ENCODE measurements at regions of chr12 and their contacts with region 1.

Region 1: GRCh38 chr12:54251667-54252284 is 28.1 kb downstream of the CBX5 start:
- DNase-seq: no peak
- ATAC-seq: peak; percentile 75
- H3K4me3 Mint-ChIP-seq: no peak overlapping the region
- H3K27ac Mint-ChIP-seq: no peak overlapping the region
- H3K4me1 Mint-ChIP-seq: peaks cover 10% of the 10 kb centered on the region
- H3K27me3 Mint-ChIP-seq: no peaks in the 10 kb centered on the region

Region 2: GRCh38 chr12:54240971-54241588 is 10.7 kb before region 1 on chr12:
- CTCF ChIA-PET with region 1: interaction called, 19 read pairs
- POLR2A ChIA-PET with region 1: no interaction called
- intact Hi-C with region 1: no loop called
- DNase-seq: no peak
- ATAC-seq: peak; percentile 85
- H3K4me3 Mint-ChIP-seq: no peak overlapping the region
- H3K27ac Mint-ChIP-seq: peak overlapping the region; percentile 55
- H3K4me1 Mint-ChIP-seq: peaks cover 10% of the 10 kb centered on the region
- H3K27me3 Mint-ChIP-seq: no peaks in the 10 kb centered on the region

Region 3: GRCh38 chr12:54265364-54265812 is 13.6 kb after region 1 on chr12:
- CTCF ChIA-PET with region 1: interaction called, 23 read pairs
- POLR2A ChIA-PET with region 1: interaction called, 4 read pairs
- intact Hi-C with region 1: no loop called
- DNase-seq: no peak
- ATAC-seq: no peak
- H3K4me3 Mint-ChIP-seq: no peak overlapping the region
- H3K27ac Mint-ChIP-seq: no peak overlapping the region
- H3K4me1 Mint-ChIP-seq: peaks cover 35% of the 10 kb centered on the region
- H3K27me3 Mint-ChIP-seq: no peaks in the 10 kb centered on the region

Region 4: DNA sequence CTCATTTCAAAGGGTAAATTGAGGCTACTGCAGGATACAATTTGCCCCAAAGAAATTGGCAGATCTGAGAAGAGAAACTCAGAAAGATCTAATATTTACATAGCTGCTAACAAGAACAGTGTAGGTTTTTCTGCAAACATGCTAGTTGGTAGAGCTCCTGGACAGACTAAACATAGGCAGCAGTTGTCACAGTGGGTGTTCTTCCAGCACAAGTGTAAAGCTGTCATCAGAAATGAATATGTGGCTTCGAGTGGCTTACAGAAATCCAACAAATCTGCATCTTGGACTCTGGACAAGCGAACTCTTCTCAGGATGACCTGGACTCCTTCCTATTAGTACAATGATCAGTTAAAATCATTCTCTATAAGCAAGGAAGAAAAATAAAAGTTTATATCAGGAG is 22.2 kb after region 1 on chr12:
- CTCF ChIA-PET with region 1: interaction called, 17 read pairs
- POLR2A ChIA-PET with region 1: no interaction called
- intact Hi-C with region 1: no loop called
- DNase-seq: no peak
- ATAC-seq: no peak
- H3K4me3 Mint-ChIP-seq: no peak overlapping the region
- H3K27ac Mint-ChIP-seq: no peak overlapping the region
- H3K4me1 Mint-ChIP-seq: peaks cover 73% of the 10 kb centered on the region
- H3K27me3 Mint-ChIP-seq: no peaks in the 10 kb centered on the region

Measured in activated CD4-positive, alpha-beta T cell treated with anti-CD3 and anti-CD28 coated beads for 36 hours (primary cell).